A549 (cell line): ENCODE measurements at regions of chr6 and their contacts with region 1.

Region 1: DNA sequence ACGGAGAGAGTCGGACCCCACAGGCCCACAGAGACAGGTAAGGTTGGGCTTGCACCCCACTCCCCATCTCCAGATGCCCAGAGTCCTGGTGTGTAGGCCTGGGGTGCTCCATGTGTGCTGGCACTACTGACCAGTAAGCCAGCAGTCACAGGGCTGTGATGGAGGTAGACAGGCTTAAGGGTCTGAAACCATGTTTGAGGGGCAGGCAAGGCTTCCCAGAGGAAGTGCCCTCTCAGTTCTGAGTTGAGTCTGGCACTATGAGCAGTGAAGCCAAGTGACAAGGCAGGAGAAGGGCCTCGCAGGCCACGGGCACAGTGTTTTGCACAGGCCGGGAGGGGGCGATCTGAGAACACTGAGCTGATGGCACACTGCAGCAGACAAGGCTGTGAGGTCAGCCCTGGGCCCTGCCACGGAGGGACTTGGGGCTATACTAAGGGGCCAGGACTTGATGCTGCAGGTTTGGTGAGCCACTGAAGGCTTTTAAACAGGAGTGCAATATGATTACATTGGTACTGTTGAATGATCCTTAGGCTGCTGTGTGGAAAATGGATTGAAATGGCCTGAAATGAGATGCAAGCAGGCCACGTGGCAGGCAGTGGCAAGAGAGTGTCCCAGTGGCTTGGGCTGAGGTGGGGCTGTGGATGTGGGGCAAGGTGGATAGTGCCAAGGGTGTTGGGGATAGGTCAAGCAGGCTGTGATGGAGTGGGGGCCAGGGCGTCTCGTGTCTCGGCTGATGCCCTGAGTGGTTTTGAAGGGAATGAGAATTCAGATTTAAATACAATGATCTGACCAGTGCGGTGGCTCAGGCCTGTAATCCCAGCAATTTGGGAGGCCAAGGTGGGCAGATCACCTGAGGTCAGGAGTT is 20.3 kb downstream of the TTBK1 start:
- DNase-seq: peak; percentile 74 to 86
- ATAC-seq: peak; percentile 96 to 98
- H3K4me3 ChIP-seq: no peak overlapping the region
- H3K27ac ChIP-seq: 0 out of 6 replicates have a peak overlapping the region, but pooled peaks of 1 of the 2 experiments have one; percentile 28
- H3K4me1 ChIP-seq: peaks cover 7% of the 10 kb centered on the region; the same call in 1 of the 3 replicates
- CTCF ChIP-seq: peak; percentile 73
- EP300 ChIP-seq: no peak
- POLR2A ChIP-seq: no peak
- RAD21 ChIP-seq: peak; percentile 87 to 90

Region 2: GRCh38 chr6:43292763-43293318 is 29.3 kb after region 1 on chr6:
- CTCF ChIA-PET with region 1: no interaction called
- POLR2A ChIA-PET with region 1: no interaction called
- DNase-seq: no peak
- ATAC-seq: no peak
- H3K4me3 ChIP-seq: no peak overlapping the region
- H3K27ac ChIP-seq: no peak overlapping the region
- H3K4me1 ChIP-seq: peaks cover 6% of the 10 kb centered on the region; the same call in 1 of the 3 replicates
- CTCF ChIP-seq: no peak
- EP300 ChIP-seq: no peak
- POLR2A ChIP-seq: no peak
- RAD21 ChIP-seq: no peak

Region 3: GRCh38 chr6:43355862-43356590 is 92.5 kb after region 1 on chr6:
- CTCF ChIA-PET with region 1: interaction called, 13 read pairs
- POLR2A ChIA-PET with region 1: no interaction called
- DNase-seq: peak; percentile 7 to 20
- ATAC-seq: peak; percentile 62 to 82; a peak in 4 of 6 replicates
- H3K4me3 ChIP-seq: no peak overlapping the region
- H3K27ac ChIP-seq: no peak overlapping the region
- H3K4me1 ChIP-seq: no peaks in the 10 kb centered on the region
- CTCF ChIP-seq: 0 out of 3 replicates have a peak, but pooled peaks have one; percentile 12
- EP300 ChIP-seq: no peak
- POLR2A ChIP-seq: no peak
- RAD21 ChIP-seq: peak; percentile 21 to 37; a peak in 4 of 5 replicates